Prostate gland (tissue), 2 donors: ENCODE measurements at regions of chr12 and their contacts with region 1.

Region 1: DNA sequence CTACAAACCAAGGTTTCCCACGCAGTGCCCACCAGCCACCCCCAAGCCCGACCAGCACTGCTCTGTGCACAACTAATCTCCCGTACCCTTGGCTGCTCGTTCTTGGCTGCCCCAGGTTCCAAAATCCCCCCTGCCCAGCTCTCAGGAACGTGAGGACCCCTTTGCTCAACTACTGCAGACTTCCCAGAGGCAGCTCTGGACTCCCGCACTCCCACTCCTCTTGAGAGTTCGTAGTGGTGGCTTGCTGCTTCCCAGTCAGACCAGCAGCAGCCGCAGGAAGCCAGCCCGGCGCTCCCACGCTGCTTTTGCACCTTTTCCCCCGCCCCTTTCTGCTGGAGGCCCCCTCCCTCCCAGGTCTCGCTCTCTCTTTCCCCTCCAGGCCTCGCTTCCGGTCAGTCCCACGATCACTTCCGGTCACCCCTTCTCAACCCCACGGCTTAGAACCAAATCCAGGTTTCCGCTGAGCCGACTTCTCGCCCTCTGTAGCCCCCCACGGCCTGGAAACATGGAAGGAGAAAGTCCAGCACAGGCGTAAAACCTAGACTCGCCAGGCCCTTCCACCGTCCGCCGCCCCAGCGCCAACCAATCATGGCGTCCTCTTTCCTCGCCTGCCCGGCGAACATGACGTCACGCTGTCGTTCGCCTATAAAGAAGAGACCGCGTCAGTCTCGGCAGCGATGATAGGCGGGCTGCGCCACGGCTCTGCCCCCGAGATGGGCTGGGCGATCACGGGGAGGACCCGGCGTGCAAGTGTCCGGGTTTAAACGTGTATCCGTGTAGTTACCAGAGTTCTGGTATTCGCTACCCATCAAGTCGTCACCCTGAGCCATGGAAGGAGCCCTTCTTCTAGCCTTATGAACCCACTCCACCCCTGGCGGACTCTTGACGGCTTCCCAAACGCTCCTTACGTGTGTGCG is at the start of gene TFCP2:
- DNase-seq: peak; percentile 95
- H3K4me3 ChIP-seq: peak within 1 kb of the TSS; percentile 61 to 65
- H3K27ac ChIP-seq: peak within 1 kb of the TSS; percentile 93 to 94
- H3K4me1 ChIP-seq: no peaks in the 10 kb centered on the region
- H3K27me3 ChIP-seq: no peaks in the 10 kb centered on the region
- CTCF ChIP-seq: peak in 2 of 4 experiments; percentile 18 to 19
- POLR2A ChIP-seq: peak; percentile 61
- total RNA-seq, gene TFCP2: 11.5 to 21.0 TPM

Region 2: DNA sequence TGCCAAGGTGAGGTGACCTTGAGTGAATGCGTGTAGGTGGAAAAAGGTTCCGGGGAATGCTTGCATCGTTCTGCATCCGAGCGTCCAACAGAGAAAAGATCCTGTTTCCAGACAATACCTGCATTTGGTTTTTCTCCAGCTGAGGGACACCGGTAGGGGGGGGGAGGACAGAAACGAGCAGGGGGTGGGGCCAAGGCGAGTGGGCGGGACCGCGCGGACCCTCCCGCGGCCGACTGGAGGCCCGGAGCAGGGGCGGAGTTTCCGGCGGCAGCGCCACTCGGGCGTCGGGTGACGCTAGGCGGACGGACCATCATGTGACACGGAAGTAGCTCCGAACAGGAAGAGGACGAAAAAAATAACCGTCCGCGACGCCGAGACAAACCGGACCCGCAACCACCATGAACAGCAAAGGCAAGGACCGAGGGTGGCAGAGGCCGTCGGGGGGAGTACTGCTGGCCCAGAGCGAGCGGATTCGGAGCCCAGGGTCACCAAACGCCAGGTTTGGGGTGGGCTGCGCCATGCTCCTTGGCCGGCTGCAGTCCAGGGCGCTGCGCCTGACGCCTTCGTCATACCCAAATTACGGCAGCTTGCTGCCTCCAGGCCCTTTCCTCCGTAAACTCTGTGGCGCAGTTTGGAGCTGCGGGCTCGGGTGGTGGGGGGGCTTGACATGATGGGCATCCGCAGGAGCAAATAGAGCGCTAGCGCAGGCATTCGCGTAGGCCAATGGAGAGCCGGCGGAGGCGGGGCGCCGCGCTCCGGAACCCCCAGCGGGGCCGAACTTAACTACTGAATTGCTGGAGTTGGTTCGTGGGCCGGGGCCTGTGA is 65.9 kb after region 1 on chr12 and contains the start of gene DAZAP2:
- intact Hi-C with region 1: loop called (anchors 1 kb)
- DNase-seq: peak; percentile 97
- H3K4me3 ChIP-seq: peak within 1 kb of the TSS; percentile 98 to 100
- H3K27ac ChIP-seq: peak within 1 kb of the TSS; percentile 100
- H3K4me1 ChIP-seq: peaks cover 6% of the 10 kb centered on the region
- H3K27me3 ChIP-seq: no peaks in the 10 kb centered on the region
- CTCF ChIP-seq: peak; percentile 28 to 56 (median 36)
- POLR2A ChIP-seq: peak; percentile 88
- total RNA-seq, gene DAZAP2: 299 to 374 TPM